Panc1 (cell line): ENCODE measurements at regions of chr2 and their contacts with region 1.

Region 1: GRCh38 chr2:238706673-238707072 is 141.2 kb upstream of the TWIST2 start:
- DNase-seq: no peak
- ATAC-seq: no peak
- H3K4me3 ChIP-seq: no peak overlapping the region
- H3K27ac ChIP-seq: no peak overlapping the region
- H3K4me1 ChIP-seq: no peaks in the 10 kb centered on the region
- H3K27me3 ChIP-seq: no peaks in the 10 kb centered on the region; the same call in 1 of the 2 replicates
- CTCF ChIP-seq: no peak

Region 2: DNA sequence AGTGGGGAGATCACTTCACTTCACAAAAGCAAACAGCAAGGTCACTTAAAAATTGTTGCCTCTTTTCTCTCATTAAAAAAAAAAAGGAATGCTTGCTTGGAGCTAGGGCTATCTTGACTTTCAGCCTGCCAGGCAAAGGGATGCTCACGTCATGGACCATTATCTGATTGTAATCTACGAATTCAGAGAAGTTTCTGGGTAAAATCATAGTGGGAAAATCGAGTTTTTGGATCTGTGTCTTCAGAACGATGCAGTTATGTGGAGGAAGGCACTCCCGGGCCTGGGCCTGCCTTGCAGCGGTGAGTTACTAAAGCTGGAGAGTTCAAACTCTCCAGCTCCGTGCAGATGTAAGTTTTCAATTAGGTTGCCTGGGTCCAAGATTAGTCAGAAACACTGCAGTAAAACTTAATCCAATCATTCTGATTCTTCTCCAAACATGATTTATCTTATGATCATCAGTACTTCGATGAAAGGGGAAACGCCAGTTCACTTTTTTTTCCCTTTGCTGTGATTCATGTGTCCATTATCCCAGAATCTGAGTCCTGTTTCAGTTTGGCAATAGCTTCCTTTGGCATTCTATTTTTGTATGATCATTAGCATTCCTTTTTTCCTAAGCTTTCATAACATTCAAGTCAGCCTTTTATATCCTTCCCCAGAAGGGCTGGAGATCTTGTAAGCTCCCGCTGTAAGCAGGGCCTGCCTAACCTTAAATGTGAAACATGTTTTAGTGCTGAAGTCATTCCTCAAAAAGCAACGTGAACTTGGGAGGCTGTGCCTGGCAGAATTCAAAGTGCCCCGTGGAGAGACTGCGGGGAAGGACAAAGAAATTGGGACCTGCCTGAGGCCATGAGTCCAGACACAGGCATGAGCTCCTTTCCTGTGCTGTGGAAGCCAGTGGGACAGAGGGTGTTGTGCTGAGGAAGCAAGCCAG is 21.9 kb after region 1 on chr2:
- CTCF ChIA-PET with region 1: no interaction called
- POLR2A ChIA-PET with region 1: interaction called, 13 read pairs
- in situ Hi-C with region 1: no loop called
- intact Hi-C with region 1: no loop called
- DNase-seq: no peak
- ATAC-seq: no peak
- H3K4me3 ChIP-seq: no peak overlapping the region
- H3K27ac ChIP-seq: no peak overlapping the region
- H3K4me1 ChIP-seq: no peaks in the 10 kb centered on the region
- H3K27me3 ChIP-seq: no peaks in the 10 kb centered on the region
- CTCF ChIP-seq: no peak

Region 3: GRCh38 chr2:238895891-238896600 is 189.4 kb after region 1 on chr2:
- CTCF ChIA-PET with region 1: no interaction called
- POLR2A ChIA-PET with region 1: no interaction called
- in situ Hi-C with region 1: no loop called
- intact Hi-C with region 1: no loop called
- DNase-seq: no peak
- ATAC-seq: peak; percentile 33; the same call in 1 of the 2 replicates
- H3K4me3 ChIP-seq: no peak overlapping the region
- H3K27ac ChIP-seq: no peak overlapping the region; the same call in 1 of the 2 replicates
- H3K4me1 ChIP-seq: peaks cover 3% of the 10 kb centered on the region; the same call in 1 of the 2 replicates
- H3K27me3 ChIP-seq: no peaks in the 10 kb centered on the region
- CTCF ChIP-seq: no peak

Region 4: DNA sequence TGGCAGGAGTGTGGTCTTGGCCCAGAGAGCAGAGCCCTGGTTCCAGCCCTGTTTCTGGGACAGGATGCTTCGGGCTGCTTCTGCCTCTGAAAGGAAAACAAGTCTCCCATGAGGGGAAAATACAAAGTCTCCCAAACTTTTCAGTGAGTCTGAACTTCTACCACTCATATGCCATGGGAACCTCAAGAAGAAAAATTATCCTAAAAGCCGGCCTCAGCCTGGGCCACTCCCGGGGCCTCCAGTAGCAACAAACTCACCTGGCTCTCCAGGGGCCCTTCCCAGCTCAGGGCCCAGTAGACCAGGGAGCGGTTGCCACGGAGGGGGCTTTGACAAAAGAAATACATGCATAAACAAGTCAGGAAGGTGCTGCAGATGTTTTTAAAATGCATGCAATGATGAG is 983.3 kb after region 1 on chr2:
- CTCF ChIA-PET with region 1: no interaction called
- POLR2A ChIA-PET with region 1: interaction called, 15 read pairs
- in situ Hi-C with region 1: no loop called
- intact Hi-C with region 1: no loop called
- DNase-seq: no peak
- ATAC-seq: no peak
- H3K4me3 ChIP-seq: no peak overlapping the region
- H3K27ac ChIP-seq: no peak overlapping the region
- H3K4me1 ChIP-seq: no peaks in the 10 kb centered on the region
- H3K27me3 ChIP-seq: peaks cover 12% of the 10 kb centered on the region; the same call in 1 of the 2 replicates
- CTCF ChIP-seq: no peak